Transverse colon (tissue), 4 donors: ENCODE measurements at regions of chr18 and their contacts with region 1.

Region 1: GRCh38 chr18:50218432-50219197 is 23.7 kb upstream of the MYO5B start:
- DNase-seq: peak; percentile 56
- H3K4me3 ChIP-seq: no peak overlapping the region
- H3K27ac ChIP-seq: no peak overlapping the region
- H3K4me1 ChIP-seq: no peaks in the 10 kb centered on the region
- H3K27me3 ChIP-seq: peaks cover 6% of the 10 kb centered on the region
- CTCF ChIP-seq: peak; percentile 29 to 50 (median 43)
- EP300 ChIP-seq: no peak
- POLR2A ChIP-seq: no peak

Region 2: DNA sequence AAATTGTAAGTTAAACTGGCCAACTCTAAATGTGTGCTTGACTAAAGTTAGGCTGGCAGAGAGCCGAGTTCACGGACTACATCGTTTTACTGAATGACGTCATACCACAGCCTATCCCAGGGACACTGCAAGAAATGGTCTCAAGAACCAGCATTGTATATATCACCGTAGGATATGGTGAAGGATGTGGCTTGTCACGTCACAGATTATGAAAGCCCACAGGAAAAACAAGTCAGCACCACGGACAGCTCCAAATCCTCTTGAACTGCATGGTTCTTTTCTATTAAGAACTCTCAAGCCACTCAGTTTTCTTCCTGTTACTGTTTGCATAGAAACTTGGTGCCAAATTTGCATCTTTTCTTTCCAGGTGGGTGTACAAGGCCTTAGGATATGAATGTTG is 320.2 kb before region 1 on chr18:
- in situ Hi-C with region 1: no loop called
- intact Hi-C with region 1: no loop called
- DNase-seq: peak; percentile 24
- H3K4me3 ChIP-seq: no peak overlapping the region
- H3K27ac ChIP-seq: no peak overlapping the region
- H3K4me1 ChIP-seq: no peaks in the 10 kb centered on the region
- H3K27me3 ChIP-seq: no peaks in the 10 kb centered on the region
- CTCF ChIP-seq: no peak
- EP300 ChIP-seq: no peak
- POLR2A ChIP-seq: no peak

Region 3: GRCh38 chr18:50183556-50183955 is 35.1 kb before region 1 on chr18:
- in situ Hi-C with region 1: no loop called
- intact Hi-C with region 1: loop called (anchors 1 kb)
- DNase-seq: no peak
- H3K4me3 ChIP-seq: no peak overlapping the region
- H3K27ac ChIP-seq: no peak overlapping the region
- H3K4me1 ChIP-seq: peaks cover 0 to 9% (median 7%) of the 10 kb centered on the region in 4 donors
- H3K27me3 ChIP-seq: no peaks in the 10 kb centered on the region
- CTCF ChIP-seq: no peak
- EP300 ChIP-seq: no peak
- POLR2A ChIP-seq: no peak

Region 4: GRCh38 chr18:50356036-50356945 is 137.7 kb after region 1 on chr18:
- in situ Hi-C with region 1: loop called (anchors 5 to 25 kb)
- intact Hi-C with region 1: no loop called
- DNase-seq: no peak
- H3K4me3 ChIP-seq: no peak overlapping the region
- H3K27ac ChIP-seq: no peak overlapping the region
- H3K4me1 ChIP-seq: no peaks in the 10 kb centered on the region
- H3K27me3 ChIP-seq: no peaks in the 10 kb centered on the region
- CTCF ChIP-seq: no peak
- EP300 ChIP-seq: no peak
- POLR2A ChIP-seq: no peak